B cell (primary cell): ENCODE measurements at regions of chr9 and their contacts with region 1.

Region 1: DNA sequence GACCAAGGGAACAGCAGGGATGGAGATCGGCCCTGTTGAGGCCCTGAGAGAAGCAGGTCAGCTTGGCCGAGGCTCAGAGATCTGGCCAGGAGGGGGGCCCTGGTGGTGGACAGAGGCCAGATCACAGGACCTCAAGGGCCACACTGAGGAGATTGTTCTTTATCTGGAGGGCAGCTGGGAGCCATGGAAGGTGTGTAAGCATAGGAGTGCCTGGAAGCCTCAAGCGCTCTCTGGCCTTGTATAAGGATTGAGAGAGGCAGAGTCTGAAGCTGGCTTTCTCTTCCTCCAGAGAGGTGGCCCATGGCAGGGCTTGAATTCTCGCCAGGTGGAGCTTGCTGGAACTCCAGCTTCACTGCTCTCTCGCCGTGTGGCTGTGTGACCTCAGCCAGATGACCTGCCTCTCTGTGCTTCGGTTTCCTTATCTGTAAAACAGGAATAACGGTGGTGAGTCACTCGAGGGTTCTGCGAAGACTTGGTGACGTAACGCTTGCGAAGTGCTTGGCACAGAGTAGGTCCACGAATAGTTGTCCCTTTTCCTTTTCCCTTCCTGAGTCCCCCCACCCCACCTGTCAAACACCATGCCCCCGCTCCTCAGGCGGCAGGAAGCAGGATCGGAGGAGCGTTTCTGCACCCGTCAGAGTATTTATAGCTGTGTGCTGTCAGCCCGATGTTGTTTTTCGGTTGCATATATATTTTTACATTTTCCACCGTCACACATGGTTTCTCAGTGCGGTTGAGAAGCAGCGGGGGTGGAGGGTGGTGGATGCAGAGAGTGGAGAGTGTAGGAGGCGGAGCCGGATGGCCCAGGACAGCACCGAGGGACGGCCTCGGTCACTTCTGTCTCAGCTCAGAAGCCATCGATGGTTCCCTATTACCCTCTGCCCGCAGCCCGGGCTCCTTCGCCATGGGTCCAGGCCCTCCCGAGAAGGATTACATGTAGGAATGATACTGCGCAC is 17.0 kb upstream of the CRB2 start:
- DNase-seq: peak; percentile 90
- ATAC-seq: peak; percentile 58
- H3K4me3 ChIP-seq: peak overlapping the region in 4 of 5 experiments; percentile 30 to 46 (median 45)
- H3K4me3 Mint-ChIP-seq: peak overlapping the region; percentile 94
- H3K27ac ChIP-seq: peak overlapping the region; percentile 98 to 99
- H3K27ac Mint-ChIP-seq: peak overlapping the region; percentile 100
- H3K4me1 ChIP-seq: peaks cover 99 to 100% of the 10 kb centered on the region in 2 donors
- H3K4me1 Mint-ChIP-seq: peaks cover 96% of the 10 kb centered on the region
- H3K27me3 ChIP-seq: no peaks in the 10 kb centered on the region
- H3K27me3 Mint-ChIP-seq: no peaks in the 10 kb centered on the region
- CTCF ChIP-seq: no peak

Region 2: GRCh38 chr9:123174887-123175518 is 164.0 kb before region 1 on chr9:
- CTCF ChIA-PET with region 1: interaction called, 6 read pairs
- POLR2A ChIA-PET with region 1: no interaction called
- intact Hi-C with region 1: loop called (anchors 1 kb)
- DNase-seq: peak; percentile 83
- ATAC-seq: peak; percentile 91
- H3K4me3 ChIP-seq: peak overlapping the region in 1 of 5 experiments; percentile 53
- H3K4me3 Mint-ChIP-seq: peak overlapping the region; percentile 76
- H3K27ac ChIP-seq: peak overlapping the region; percentile 85 to 96
- H3K27ac Mint-ChIP-seq: peak overlapping the region; percentile 93
- H3K4me1 ChIP-seq: peaks cover 50 to 54% of the 10 kb centered on the region in 2 donors
- H3K4me1 Mint-ChIP-seq: peaks cover 74% of the 10 kb centered on the region
- H3K27me3 ChIP-seq: no peaks in the 10 kb centered on the region
- H3K27me3 Mint-ChIP-seq: no peaks in the 10 kb centered on the region
- CTCF ChIP-seq: no peak

Region 3: DNA sequence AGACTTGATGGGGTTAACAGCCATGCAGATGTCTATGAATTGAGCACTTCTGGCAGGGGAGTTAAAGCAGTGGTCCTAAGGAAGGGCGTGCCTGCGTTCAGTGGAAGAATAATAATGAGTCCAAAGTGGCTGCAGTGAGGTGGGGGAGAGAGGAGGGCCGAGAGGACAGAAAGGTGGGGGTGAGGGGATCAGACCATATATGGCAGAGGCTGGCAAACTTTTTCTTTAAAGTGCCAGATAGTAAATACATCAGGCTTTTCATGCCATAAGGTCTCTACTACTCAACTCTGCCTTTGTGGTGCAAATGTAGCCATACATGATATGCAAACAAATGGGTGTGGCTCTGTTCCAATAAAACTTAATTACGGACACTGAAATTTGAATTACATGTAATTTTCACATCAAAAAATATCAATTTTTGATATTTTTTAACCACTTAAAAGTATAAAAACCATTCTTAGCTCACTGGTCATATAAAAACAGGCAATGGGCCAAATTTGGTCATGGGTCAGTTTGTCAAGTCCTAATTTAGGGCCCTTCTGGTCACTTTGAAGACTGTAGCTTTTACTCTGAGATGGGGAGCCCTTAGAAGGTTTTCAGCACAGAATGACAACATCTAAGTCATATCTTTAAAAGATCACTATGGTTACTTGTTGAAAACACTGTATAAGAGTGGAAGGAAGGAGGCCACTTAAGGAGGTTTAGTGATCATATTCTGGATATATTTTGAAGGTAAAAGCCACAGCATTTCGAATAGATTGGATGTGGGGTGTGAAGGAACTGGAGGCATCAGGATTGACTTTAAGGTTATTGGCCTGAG is 147.5 kb before region 1 on chr9:
- CTCF ChIA-PET with region 1: no interaction called
- POLR2A ChIA-PET with region 1: interaction called, 11 read pairs
- intact Hi-C with region 1: no loop called
- DNase-seq: no peak
- ATAC-seq: no peak
- H3K4me3 ChIP-seq: no peak overlapping the region
- H3K4me3 Mint-ChIP-seq: no peak overlapping the region
- H3K27ac ChIP-seq: peak overlapping the region; percentile 2 to 35
- H3K27ac Mint-ChIP-seq: no peak overlapping the region
- H3K4me1 ChIP-seq: peaks cover 40 to 49% of the 10 kb centered on the region in 2 donors
- H3K4me1 Mint-ChIP-seq: peaks cover 16% of the 10 kb centered on the region
- H3K27me3 ChIP-seq: no peaks in the 10 kb centered on the region
- H3K27me3 Mint-ChIP-seq: no peaks in the 10 kb centered on the region
- CTCF ChIP-seq: no peak

Region 4: GRCh38 chr9:123234853-123235252 is 104.1 kb before region 1 on chr9:
- CTCF ChIA-PET with region 1: interaction called, 11 read pairs
- POLR2A ChIA-PET with region 1: interaction called, 12 read pairs
- intact Hi-C with region 1: loop called (anchors 1 kb)
- DNase-seq: peak; percentile 75
- ATAC-seq: peak; percentile 63
- H3K4me3 ChIP-seq: peak overlapping the region in 3 of 5 experiments; percentile 8 to 51 (median 23)
- H3K4me3 Mint-ChIP-seq: peak overlapping the region; percentile 75
- H3K27ac ChIP-seq: peak overlapping the region; percentile 85 to 90
- H3K27ac Mint-ChIP-seq: peak overlapping the region; percentile 90
- H3K4me1 ChIP-seq: peaks cover 75 to 82% of the 10 kb centered on the region in 2 donors
- H3K4me1 Mint-ChIP-seq: peaks cover 68% of the 10 kb centered on the region
- H3K27me3 ChIP-seq: no peaks in the 10 kb centered on the region
- H3K27me3 Mint-ChIP-seq: no peaks in the 10 kb centered on the region
- CTCF ChIP-seq: no peak

Region 5: DNA sequence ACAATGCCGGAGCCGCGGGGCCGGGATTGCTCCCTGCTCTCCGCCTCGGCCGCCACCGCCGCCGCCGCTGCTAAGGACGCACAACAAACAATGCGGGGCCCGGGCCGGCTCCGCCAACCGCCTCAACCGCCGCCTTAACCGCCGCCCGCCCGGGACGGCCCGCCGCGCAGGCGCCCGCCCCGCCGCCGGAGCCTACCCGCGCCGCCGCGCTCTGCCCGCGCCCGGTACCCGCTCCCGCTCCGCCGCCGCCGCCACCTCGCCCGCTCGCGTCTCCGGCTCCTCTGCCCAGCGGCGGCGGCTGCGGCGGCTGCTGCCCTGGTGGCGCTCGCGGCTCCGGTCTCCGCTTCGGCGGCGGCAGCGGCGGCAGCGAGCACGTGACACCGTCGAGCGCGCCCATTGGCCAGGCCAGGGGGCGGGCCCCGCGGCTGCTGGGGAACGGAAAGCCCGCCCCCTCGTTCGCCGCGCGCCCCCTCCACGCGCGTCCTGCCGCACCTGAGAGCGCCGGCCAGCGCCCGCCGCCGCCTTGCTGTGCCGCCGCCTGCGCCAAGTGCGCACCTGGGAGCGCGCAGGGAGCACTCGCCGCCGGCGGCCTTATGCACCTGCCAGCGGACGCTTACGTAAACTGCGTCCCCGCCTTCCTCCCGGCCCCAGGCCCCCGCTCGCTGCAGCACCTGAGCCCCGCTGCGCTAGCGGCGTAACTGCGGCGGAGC is 70.6 kb before region 1 on chr9 and contains the start of gene STRBP:
- CTCF ChIA-PET with region 1: interaction called, 18 read pairs
- POLR2A ChIA-PET with region 1: interaction called, 45 read pairs
- intact Hi-C with region 1: loop called (anchors 1 kb)
- DNase-seq: peak; percentile 99
- ATAC-seq: peak; percentile 91
- H3K4me3 ChIP-seq: peak within 1 kb of the TSS; percentile 55 to 95 (median 79)
- H3K4me3 Mint-ChIP-seq: peak within 1 kb of the TSS; percentile 91
- H3K27ac ChIP-seq: peak within 1 kb of the TSS; percentile 84 to 93
- H3K27ac Mint-ChIP-seq: peak within 1 kb of the TSS; percentile 89
- H3K4me1 ChIP-seq: peaks cover 41 to 51% of the 10 kb centered on the region in 2 donors
- H3K4me1 Mint-ChIP-seq: peaks cover 46% of the 10 kb centered on the region
- H3K27me3 ChIP-seq: no peaks in the 10 kb centered on the region
- H3K27me3 Mint-ChIP-seq: no peaks in the 10 kb centered on the region
- CTCF ChIP-seq: no peak
- total RNA-seq, gene STRBP: 189 and 197 TPM in 2 replicates

Region 6: GRCh38 chr9:123302348-123303214 is 36.4 kb before region 1 on chr9:
- CTCF ChIA-PET with region 1: interaction called, 5 read pairs
- POLR2A ChIA-PET with region 1: interaction called, 5 read pairs
- intact Hi-C with region 1: loop called (anchors 2 kb)
- DNase-seq: no peak
- ATAC-seq: no peak
- H3K4me3 ChIP-seq: no peak overlapping the region
- H3K4me3 Mint-ChIP-seq: no peak overlapping the region
- H3K27ac ChIP-seq: no peak overlapping the region
- H3K27ac Mint-ChIP-seq: no peak overlapping the region
- H3K4me1 ChIP-seq: peaks cover 17 to 20% of the 10 kb centered on the region in 2 donors
- H3K4me1 Mint-ChIP-seq: peaks cover 14% of the 10 kb centered on the region
- H3K27me3 ChIP-seq: no peaks in the 10 kb centered on the region
- H3K27me3 Mint-ChIP-seq: no peaks in the 10 kb centered on the region
- CTCF ChIP-seq: no peak

Region 7: DNA sequence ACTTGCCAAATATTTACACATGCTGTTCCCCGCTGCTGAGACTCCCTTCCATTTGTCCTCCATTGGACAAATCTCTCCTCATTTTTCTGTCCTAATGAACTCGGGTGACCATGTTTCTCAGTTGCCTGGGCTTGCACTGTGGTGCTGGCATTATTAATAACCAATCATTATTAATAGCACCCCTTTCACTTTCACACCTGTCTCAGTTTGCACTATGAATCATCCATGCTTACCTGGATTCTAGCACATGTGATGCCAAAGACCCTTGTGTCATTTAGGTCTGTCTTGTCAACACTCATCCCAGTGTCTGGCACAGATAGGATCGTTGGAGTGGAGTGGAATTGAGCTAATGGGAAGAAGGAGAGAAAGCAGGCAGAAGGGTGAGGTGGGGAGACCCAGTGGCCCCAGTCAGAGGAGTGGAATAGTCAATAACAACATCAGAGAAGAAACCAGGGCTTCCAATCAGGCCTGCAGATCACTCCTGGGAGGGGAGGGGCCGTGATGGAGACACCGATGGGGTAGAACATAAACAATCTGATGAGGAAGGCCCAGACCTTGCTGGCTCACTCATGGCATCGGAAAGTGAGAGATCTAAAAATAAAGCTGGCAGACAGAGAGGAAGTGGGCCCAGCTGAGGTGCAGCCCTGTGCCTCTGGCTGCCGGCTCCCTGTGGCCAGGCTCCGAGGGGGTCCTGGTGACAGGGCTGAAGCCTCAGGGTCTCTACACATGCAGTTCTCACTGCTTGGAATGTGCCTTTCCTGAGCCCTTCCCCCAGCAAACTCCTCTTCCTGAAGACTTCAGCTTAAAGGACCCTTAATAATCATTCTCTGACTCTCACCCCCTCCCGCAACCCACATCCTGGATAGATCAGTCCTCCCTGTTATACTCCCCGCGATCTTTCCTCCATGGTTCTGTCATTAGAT is 16.5 kb before region 1 on chr9:
- CTCF ChIA-PET with region 1: interaction called, 60 read pairs
- POLR2A ChIA-PET with region 1: interaction called, 63 read pairs
- intact Hi-C with region 1: loop called (anchors 1 kb)
- DNase-seq: peak; percentile 76
- ATAC-seq: peak; percentile 79
- H3K4me3 ChIP-seq: peak overlapping the region in 4 of 5 experiments; percentile 1 to 41 (median 34)
- H3K4me3 Mint-ChIP-seq: peak overlapping the region; percentile 66
- H3K27ac ChIP-seq: peak overlapping the region; percentile 73 to 86
- H3K27ac Mint-ChIP-seq: peak overlapping the region; percentile 89
- H3K4me1 ChIP-seq: peaks cover 70 to 85% of the 10 kb centered on the region in 2 donors
- H3K4me1 Mint-ChIP-seq: peaks cover 86% of the 10 kb centered on the region
- H3K27me3 ChIP-seq: no peaks in the 10 kb centered on the region
- H3K27me3 Mint-ChIP-seq: no peaks in the 10 kb centered on the region
- CTCF ChIP-seq: no peak